SK-N-SH (cell line): ENCODE measurements at regions of chr3 and their contacts with region 1.

Region 1: DNA sequence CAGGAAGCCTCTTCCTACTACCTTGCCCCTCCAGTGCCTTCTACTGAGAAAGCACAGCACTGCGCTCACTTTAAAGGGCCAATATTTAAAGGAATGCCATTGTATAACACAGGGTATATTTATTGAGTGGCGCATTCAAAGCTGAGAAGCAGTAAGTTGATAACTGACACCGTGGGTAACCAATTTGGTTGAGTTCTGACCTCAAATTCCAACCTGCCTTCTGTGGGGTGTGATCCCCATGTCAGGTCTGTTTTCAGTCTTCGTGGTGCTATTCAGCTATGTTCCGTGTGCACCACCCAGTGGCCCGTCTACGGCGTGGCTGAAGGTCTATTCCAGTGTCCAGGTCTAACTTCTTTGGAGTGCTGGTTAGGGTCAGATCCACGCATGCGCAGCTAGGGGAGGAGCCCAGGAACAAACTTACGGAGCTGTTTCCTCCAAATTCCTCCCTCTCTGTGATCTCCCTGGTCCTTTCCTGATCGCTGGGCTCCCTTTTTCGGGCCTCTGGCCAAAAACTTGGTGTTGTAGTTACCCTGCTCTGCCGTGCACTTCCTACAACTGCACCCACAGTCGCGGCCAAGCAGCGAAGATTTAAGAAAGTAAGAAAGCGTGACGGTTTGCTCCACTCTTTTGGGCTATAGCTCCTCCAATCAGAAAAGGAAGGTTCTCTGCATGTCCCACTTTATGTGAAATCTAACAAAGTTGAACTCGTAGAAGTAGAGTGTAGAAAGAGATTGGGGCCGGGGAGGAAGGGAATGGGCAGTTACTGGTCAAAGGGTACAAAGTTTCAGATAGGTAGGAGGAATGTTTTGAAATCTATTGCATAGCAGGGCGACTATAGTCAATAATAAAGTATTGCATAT is 7.7 kb downstream of the LRRC2 start:
- DNase-seq: peak; percentile 80
- H3K4me3 ChIP-seq: peak overlapping the region; percentile 51 to 55
- H3K27ac ChIP-seq: no peak overlapping the region
- H3K4me1 ChIP-seq: peaks cover 0 to 15% of the 10 kb centered on the region in 2 experiments; a peak in 2 of 4 replicates
- H3K27me3 ChIP-seq: no peaks in the 10 kb centered on the region
- CTCF ChIP-seq: peak; percentile 68
- EP300 ChIP-seq: no peak
- RAD21 ChIP-seq: peak; percentile 86

Region 2: GRCh38 chr3:46480481-46481195 is 77.8 kb before region 1 on chr3:
- CTCF ChIA-PET with region 1: interaction called, 223 read pairs
- POLR2A ChIA-PET with region 1: no interaction called
- DNase-seq: no peak
- H3K4me3 ChIP-seq: no peak overlapping the region
- H3K27ac ChIP-seq: no peak overlapping the region
- H3K4me1 ChIP-seq: no peaks in the 10 kb centered on the region; a peak in 1 of 4 replicates
- H3K27me3 ChIP-seq: peaks cover 7% of the 10 kb centered on the region; the same call in 1 of the 2 replicates
- CTCF ChIP-seq: no peak
- EP300 ChIP-seq: no peak
- RAD21 ChIP-seq: no peak

Region 3: GRCh38 chr3:46496741-46497554 is 61.5 kb before region 1 on chr3:
- CTCF ChIA-PET with region 1: interaction called, 12 read pairs
- POLR2A ChIA-PET with region 1: no interaction called
- DNase-seq: no peak
- H3K4me3 ChIP-seq: no peak overlapping the region
- H3K27ac ChIP-seq: no peak overlapping the region
- H3K4me1 ChIP-seq: no peaks in the 10 kb centered on the region; a peak in 1 of 4 replicates
- H3K27me3 ChIP-seq: no peaks in the 10 kb centered on the region
- CTCF ChIP-seq: peak; percentile 45
- EP300 ChIP-seq: no peak
- RAD21 ChIP-seq: peak; percentile 44

Region 4: DNA sequence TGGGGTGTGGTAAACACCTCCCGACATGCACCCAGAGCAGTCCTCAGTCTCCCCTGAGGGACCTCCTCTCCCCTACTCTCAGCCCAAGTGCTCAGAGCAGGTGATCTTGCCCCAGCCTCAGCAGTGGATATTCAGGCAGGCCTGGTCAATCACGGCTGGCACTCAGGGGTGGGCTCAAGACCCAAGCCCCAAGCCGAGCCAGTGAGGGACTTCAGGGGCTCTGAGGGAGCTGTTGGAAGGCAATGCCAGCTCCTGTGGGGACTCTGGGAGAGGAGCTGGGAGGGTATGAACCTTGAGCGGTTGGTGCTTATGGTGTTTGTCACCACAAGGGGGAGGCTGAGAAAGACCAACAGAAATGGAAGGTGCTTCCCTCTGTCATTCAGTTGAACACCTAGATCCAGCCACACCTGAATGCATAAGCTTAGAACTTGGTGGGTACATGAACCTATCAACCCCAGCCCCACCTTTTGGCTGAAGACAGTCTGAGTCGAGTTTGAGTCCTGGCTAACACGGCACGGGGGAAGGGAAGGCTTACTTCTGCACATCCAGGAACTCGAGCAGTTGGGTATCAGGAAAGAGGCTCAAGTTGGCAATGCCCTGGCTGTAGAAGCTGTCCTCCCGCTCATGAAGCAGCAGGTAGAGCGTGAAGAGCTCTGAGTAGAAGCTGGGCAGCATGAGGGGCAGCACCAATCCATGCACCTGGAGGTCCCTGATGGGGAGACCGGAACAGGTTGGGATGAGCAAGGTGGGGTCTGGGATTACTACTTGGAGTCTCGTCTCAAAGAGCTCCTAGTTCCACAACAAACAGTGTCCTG is 115.8 kb after region 1 on chr3:
- CTCF ChIA-PET with region 1: no interaction called
- POLR2A ChIA-PET with region 1: no interaction called
- DNase-seq: no peak
- H3K4me3 ChIP-seq: no peak overlapping the region
- H3K27ac ChIP-seq: no peak overlapping the region
- H3K4me1 ChIP-seq: peaks cover 0 to 9% of the 10 kb centered on the region in 2 experiments; a peak in 1 of 4 replicates
- H3K27me3 ChIP-seq: no peaks in the 10 kb centered on the region
- CTCF ChIP-seq: no peak; the same call in 1 of the 2 replicates
- EP300 ChIP-seq: no peak
- RAD21 ChIP-seq: no peak

Region 5: DNA sequence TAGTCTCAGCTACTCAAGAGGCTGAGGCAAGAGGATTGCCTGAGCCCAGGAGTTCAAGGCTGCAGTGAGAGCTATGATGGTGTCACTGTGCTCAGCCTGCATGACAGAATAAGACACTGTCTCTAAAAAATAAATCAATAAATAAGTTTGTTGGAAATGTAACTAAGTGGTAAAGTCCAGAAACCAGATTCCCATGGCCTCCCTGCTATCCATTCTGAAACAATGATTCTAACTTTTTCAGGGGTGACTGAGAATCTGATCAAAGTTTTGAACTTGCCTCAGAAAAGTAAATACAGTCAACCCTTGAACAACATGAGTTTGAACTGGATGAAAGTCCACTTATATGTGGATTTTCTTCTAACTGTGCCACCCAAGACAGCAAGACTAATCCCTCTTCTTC is 507.3 kb after region 1 on chr3:
- CTCF ChIA-PET with region 1: no interaction called
- POLR2A ChIA-PET with region 1: no interaction called
- DNase-seq: no peak
- H3K4me3 ChIP-seq: no peak overlapping the region
- H3K27ac ChIP-seq: no peak overlapping the region
- H3K4me1 ChIP-seq: no peaks in the 10 kb centered on the region
- H3K27me3 ChIP-seq: no peaks in the 10 kb centered on the region
- CTCF ChIP-seq: no peak
- EP300 ChIP-seq: no peak
- RAD21 ChIP-seq: no peak